Activated naive CD4-positive, alpha-beta T cell treated with anti-CD3 and anti-CD28 coated beads for 36 hours (primary cell): ENCODE measurements at regions of chr12 and their contacts with region 1.

Region 1: GRCh38 chr12:9797722-9798619 is 29.3 kb upstream of the KLRF1 start:
- DNase-seq: peak; percentile 84
- H3K4me3 Mint-ChIP-seq: peak overlapping the region; percentile 0
- H3K27ac Mint-ChIP-seq: peak overlapping the region; percentile 98
- H3K4me1 Mint-ChIP-seq: peaks cover 40% of the 10 kb centered on the region
- H3K27me3 Mint-ChIP-seq: no peaks in the 10 kb centered on the region

Region 2: GRCh38 chr12:9464408-9464807 is 333.6 kb before region 1 on chr12:
- CTCF ChIA-PET with region 1: no interaction called
- intact Hi-C with region 1: no loop called
- DNase-seq: no peak
- H3K4me3 Mint-ChIP-seq: no peak overlapping the region
- H3K27ac Mint-ChIP-seq: no peak overlapping the region
- H3K4me1 Mint-ChIP-seq: peaks cover 9% of the 10 kb centered on the region
- H3K27me3 Mint-ChIP-seq: no peaks in the 10 kb centered on the region

Region 3: DNA sequence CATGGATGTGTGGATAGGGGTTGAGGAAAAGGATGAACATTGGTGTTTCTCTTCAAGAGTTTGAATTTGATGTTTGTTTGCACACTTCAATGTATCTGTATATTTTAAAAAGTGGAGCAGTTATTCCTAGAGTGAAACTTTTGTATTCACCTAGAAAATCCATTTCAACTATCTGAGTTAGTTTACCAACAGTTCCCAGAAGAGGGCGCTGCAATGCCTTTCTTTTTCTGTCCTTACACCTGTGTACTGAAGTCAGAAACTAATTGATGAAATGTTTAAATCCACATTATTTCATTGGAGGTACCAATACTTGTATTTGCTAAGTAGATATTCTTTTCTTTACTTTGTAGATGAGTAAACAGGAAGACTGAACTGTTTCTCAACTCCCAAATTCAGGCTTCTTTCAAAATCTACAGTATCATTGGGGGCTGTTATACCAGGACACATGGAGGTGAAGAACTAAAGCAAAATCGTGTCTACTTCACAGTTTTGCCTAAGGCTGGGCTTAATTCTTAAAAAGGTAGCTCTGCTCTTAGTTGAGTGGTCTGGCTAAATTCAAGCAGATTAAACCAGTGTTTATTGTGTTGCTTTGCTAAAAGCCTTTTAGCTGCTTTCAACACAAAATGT is 163.7 kb before region 1 on chr12:
- CTCF ChIA-PET with region 1: interaction called, 9 read pairs
- intact Hi-C with region 1: loop called (anchors 1 kb)
- DNase-seq: peak; percentile 95
- H3K4me3 Mint-ChIP-seq: peak overlapping the region; percentile 55
- H3K27ac Mint-ChIP-seq: peak overlapping the region; percentile 90
- H3K4me1 Mint-ChIP-seq: peaks cover 56% of the 10 kb centered on the region
- H3K27me3 Mint-ChIP-seq: no peaks in the 10 kb centered on the region

Region 4: DNA sequence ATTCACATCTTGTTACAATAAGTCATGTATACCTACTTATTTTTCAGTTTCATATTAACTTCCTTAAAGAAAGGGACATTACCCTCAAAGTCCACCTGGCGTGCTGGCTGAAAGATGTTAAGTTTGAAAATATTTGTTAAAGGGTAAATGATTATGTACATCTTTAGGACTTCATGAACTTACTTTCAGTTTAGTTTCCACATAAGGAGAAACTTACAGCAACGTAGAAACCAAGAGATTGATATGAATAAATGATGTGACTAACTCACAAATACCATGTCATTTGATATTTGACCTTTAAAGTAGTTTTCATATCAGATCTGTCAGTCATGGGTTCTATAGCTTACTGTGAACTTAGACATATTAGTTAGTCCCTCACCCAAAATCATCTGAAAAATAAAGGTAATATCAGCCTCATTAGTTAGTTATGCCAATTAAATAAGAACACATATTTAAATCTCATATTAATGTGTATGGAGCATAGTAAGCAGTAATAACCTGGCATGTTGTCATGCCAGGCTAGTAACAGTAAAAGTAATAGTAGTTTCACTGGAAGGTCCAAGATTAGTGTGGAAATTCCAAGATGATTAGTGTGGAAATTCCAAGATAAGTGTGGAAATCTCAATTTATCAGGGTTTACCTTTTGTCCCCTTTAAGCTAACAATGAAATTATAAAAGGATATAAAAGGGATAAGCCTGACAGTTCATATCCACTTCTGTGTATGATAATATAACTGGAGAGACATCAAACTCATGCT is 130.4 kb before region 1 on chr12:
- CTCF ChIA-PET with region 1: interaction called, 3 read pairs
- intact Hi-C with region 1: loop called (anchors 1 kb)
- DNase-seq: peak; percentile 50
- H3K4me3 Mint-ChIP-seq: peak overlapping the region; percentile 90
- H3K27ac Mint-ChIP-seq: peak overlapping the region; percentile 97
- H3K4me1 Mint-ChIP-seq: peaks cover 56% of the 10 kb centered on the region
- H3K27me3 Mint-ChIP-seq: no peaks in the 10 kb centered on the region

Region 5: DNA sequence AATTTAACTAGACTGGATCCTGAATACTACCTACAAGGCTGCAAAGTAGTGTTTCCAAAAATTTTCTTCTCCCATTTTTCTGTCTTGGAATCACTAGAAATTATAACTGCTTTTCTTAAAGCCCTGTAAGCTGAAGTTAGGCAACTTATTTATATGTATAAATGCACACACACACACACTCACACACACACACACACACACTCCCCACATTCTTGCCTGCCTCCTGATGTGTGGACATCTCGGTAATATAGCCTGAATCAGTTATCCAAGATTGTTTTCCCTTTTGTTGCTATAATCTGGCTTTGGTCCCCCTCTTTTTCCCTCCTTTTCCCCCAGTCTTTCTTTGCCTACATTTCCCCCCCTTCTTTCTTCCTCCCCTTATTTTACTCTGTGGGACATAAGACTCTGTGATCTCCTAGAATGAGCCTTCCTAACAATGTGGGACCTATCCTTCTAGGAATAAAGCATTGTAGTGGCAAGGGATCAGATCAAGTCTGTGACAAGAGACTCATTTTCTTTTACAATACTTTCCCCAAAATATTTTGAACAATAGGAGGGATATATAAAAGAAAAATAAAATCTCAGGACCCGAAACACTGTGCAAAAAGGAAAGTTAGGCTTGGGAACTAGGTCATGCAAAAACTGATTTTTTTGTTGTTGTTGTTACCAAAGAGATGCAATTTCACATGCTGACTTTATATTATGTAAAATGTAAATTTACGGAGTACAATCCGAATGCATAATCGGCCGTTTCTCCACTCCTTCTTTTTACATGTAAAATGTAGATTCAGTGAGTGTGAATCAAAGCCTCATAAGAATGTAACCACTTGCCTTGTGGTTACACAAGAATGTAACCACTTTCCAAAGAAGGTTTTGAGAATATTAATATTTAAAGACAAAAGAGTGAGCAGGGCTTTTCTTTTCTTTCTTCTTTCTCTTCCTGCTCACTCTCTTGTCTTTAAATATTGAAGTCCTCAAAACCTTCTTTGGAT is 10.9 kb before region 1 on chr12:
- CTCF ChIA-PET with region 1: interaction called, 10 read pairs
- intact Hi-C with region 1: loop called (anchors 1 kb)
- DNase-seq: no peak
- H3K4me3 Mint-ChIP-seq: peak overlapping the region; percentile 34
- H3K27ac Mint-ChIP-seq: no peak overlapping the region
- H3K4me1 Mint-ChIP-seq: peaks cover 64% of the 10 kb centered on the region
- H3K27me3 Mint-ChIP-seq: no peaks in the 10 kb centered on the region

Region 6: GRCh38 chr12:9925708-9926393 is 127.9 kb after region 1 on chr12:
- CTCF ChIA-PET with region 1: interaction called, 5 read pairs
- intact Hi-C with region 1: loop called (anchors 5 kb)
- DNase-seq: peak; percentile 9
- H3K4me3 Mint-ChIP-seq: peak overlapping the region; percentile 57
- H3K27ac Mint-ChIP-seq: peak overlapping the region; percentile 66
- H3K4me1 Mint-ChIP-seq: peaks cover 21% of the 10 kb centered on the region
- H3K27me3 Mint-ChIP-seq: peaks cover 2% of the 10 kb centered on the region